ENCODE measurements at regions of chr16 and their contacts with region 1.

Region 1: DNA sequence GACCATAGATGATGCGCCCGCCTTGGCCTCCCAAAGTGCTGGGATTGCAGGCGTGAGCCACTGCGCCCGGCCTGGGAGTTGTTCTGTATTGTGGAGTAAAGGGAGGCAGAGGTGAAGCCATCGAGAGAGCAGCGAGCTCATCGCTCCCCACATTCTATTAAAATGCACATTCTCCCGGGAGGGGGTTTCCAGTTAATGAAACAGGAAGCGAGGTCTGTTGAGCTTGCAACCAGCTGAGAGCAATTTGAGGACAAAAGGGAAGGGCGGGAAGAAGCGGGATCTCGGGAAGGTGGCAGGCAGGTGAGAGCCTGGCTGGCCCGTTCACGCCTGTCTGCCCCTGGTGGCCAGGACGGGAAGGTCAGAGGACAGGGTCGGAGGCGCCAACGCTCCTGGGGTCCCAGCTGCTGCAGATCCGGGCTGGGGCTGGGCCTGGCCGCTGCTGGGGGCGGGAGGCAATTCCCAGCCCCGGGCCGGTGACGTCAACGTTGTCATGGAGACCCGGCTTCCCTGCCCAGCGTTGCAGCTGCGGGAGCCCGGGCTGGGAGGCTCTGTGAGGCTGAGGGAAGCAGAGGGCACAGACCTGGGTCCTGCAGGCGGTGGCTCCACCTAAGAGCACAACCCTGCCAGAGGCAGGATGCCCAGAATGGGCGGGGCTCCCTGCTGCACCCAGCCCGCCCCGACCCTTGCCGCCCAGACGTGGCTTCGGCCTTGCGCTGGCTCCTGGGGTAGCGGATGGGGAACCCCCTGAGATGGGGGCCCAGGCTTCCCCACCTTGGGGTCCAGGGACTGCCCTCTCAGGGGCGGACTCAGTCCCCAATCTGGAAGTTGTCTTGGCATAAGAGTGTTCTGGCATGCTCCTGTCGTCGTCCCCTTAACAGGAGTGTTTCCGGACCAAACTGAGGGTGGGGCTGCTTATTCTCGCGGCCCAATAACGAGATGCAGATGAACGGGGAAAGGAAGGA is 48.7 kb upstream of the PLCG2 start:
- DNase-seq: peak; percentile 42 to 73 (median 58)
- H3K4me3 ChIP-seq: peak overlapping the region; percentile 11 to 25
- H3K4me3 Mint-ChIP-seq: peak overlapping the region; percentile 85 to 93 (median 88)
- H3K27ac ChIP-seq: peak overlapping the region; percentile 65
- H3K27ac Mint-ChIP-seq: peak overlapping the region; percentile 78 to 97 (median 93)
- H3K4me1 ChIP-seq: peaks cover 12% of the 10 kb centered on the region
- H3K4me1 Mint-ChIP-seq: peaks cover 8 to 25% (median 17%) of the 10 kb centered on the region in 4 donors
- H3K27me3 ChIP-seq: no peaks in the 10 kb centered on the region
- H3K27me3 Mint-ChIP-seq: no peaks in the 10 kb centered on the region

Region 2: DNA sequence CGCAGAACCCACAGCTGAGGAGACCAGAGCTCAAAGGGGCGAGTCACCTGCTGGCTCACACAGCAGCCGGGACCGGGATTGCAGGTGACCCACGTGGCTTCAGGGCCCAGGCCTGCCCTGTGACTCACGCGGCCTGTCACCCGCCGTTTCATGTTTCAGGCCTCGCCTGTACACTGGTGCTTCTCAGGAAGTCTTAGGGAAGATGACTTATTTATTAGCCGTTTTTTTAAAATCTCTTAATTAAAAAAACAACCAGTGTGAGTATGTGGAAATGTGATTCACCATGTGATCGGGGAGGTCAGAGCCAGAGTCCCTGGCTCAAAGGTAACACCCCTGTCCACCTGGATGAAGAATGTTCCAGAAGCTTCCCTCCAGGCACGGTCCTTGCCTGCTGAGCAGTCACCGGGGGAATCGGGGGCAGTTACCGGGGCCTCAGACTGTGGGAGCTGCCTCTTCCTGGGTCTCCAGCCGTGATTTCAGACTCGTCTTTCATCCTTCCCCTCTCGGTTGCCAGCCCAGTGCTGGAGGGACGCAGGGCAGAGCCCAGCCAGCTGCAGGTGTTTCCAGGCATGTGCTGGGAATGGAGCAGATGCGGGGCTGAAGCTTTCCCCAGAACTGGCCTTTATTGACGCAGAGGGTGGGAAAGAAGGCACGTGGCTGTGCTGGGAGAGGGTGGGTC is 236.5 kb before region 1 on chr16:
- CTCF ChIA-PET with region 1: no interaction called
- POLR2A ChIA-PET with region 1: no interaction called
- intact Hi-C with region 1: no loop called
- DNase-seq: no peak
- H3K4me3 ChIP-seq: no peak overlapping the region
- H3K4me3 Mint-ChIP-seq: no peak overlapping the region
- H3K27ac ChIP-seq: no peak overlapping the region
- H3K27ac Mint-ChIP-seq: peak overlapping the region in 5 of 7 donors; percentile 13 to 85 (median 32)
- H3K4me1 ChIP-seq: peaks cover 14% of the 10 kb centered on the region
- H3K4me1 Mint-ChIP-seq: peaks cover 18 to 54% (median 40%) of the 10 kb centered on the region in 4 donors
- H3K27me3 ChIP-seq: no peaks in the 10 kb centered on the region
- H3K27me3 Mint-ChIP-seq: no peaks in the 10 kb centered on the region

Region 3: DNA sequence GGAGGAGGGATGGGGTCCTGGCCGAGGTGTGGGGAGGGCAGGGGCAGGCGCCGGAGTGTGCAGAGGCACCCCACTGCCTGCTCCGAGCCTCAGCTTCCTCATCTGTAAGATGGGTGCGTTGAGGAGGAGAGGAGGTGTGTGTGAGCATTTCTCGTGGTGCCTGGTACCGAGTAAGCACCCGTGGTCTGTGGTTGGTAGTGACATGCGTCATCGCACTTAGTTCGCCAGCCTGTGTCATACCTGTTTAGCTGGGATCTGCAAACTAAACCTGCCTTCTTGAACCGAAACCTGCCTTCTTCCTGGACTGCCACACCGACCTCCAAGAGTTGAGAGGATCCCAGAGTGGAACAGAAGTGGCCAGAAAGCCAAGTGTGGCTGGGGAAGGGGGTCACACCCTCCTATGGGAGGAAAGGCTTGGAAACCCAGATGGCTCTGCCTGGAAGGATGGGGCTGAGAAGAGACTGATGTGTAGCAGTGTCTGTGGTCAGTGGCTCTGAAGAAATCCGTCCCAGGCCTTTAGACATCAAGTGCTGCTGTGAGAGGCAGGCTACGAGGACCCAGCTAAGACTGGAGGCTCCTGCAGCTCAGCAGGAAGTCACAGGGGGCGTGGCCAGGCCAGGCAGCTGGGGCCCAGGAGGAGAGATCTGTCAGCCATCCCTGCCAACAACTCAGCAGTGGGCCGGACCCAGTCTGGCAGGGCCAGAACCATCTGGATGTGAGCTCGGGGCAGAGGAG is 113.9 kb before region 1 on chr16:
- CTCF ChIA-PET with region 1: interaction called, 112 read pairs
- POLR2A ChIA-PET with region 1: interaction called, 6 read pairs
- intact Hi-C with region 1: no loop called
- DNase-seq: peak; percentile 75 to 89 (median 84)
- H3K4me3 ChIP-seq: peak overlapping the region; percentile 10 to 53
- H3K4me3 Mint-ChIP-seq: peak overlapping the region; percentile 63 to 82 (median 76)
- H3K27ac ChIP-seq: peak overlapping the region; percentile 75
- H3K27ac Mint-ChIP-seq: peak overlapping the region in 2 of 7 donors; percentile 96 to 97
- H3K4me1 ChIP-seq: peaks cover 25% of the 10 kb centered on the region
- H3K4me1 Mint-ChIP-seq: peaks cover 9 to 19% (median 12%) of the 10 kb centered on the region in 4 donors
- H3K27me3 ChIP-seq: no peaks in the 10 kb centered on the region
- H3K27me3 Mint-ChIP-seq: no peaks in the 10 kb centered on the region

Region 4: DNA sequence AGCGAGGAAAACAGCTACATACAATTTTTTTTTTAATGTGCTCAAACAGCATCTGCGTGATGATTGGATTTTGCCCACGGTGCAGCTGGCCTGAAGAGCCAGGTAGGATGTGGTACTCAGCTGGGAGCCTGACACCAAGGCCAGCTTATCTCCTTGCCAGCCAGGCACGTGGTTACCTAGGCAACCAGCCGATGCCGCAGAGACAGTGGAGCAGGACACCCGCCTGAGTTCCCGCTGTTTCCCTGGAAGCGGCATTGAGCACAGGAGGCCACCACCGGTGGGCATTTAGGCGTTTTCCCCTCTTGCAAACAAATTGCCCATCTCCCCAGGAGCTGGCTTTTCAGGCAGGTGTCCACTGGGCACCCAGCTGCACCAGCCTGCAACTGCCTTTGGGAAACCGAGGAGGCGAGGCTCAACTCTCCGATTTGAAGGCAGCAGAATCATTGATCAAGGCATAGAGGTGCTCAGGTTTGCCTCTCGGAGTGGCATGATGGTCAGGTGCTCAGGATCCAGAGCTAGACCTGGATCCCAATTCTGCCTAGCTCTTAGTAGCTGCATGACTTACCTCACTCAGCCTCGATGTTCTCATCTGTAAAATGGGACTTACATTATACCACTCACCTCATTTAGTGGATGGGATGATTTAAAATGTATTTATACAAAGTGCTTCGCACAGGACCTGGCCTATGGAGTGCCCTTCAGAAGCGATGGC is 88.8 kb before region 1 on chr16:
- CTCF ChIA-PET with region 1: no interaction called
- POLR2A ChIA-PET with region 1: no interaction called
- intact Hi-C with region 1: no loop called
- DNase-seq: no peak
- H3K4me3 ChIP-seq: no peak overlapping the region
- H3K4me3 Mint-ChIP-seq: no peak overlapping the region
- H3K27ac ChIP-seq: no peak overlapping the region
- H3K27ac Mint-ChIP-seq: peak overlapping the region in 1 of 7 donors; percentile 35
- H3K4me1 ChIP-seq: no peaks in the 10 kb centered on the region
- H3K4me1 Mint-ChIP-seq: peaks cover 6 to 11% (median 9%) of the 10 kb centered on the region in 4 donors
- H3K27me3 ChIP-seq: no peaks in the 10 kb centered on the region
- H3K27me3 Mint-ChIP-seq: no peaks in the 10 kb centered on the region

Region 5: GRCh38 chr16:81745704-81746558 is 15.6 kb after region 1 on chr16:
- CTCF ChIA-PET with region 1: interaction called, 9 read pairs
- POLR2A ChIA-PET with region 1: interaction called, 3 read pairs
- intact Hi-C with region 1: loop called (anchors 1 kb)
- DNase-seq: peak; percentile 63 to 74 (median 71)
- H3K4me3 ChIP-seq: peak overlapping the region; percentile 37 to 50
- H3K4me3 Mint-ChIP-seq: peak overlapping the region; percentile 76 to 94 (median 86)
- H3K27ac ChIP-seq: peak overlapping the region; percentile 38
- H3K27ac Mint-ChIP-seq: peak overlapping the region; percentile 75 to 93 (median 88)
- H3K4me1 ChIP-seq: peaks cover 12% of the 10 kb centered on the region
- H3K4me1 Mint-ChIP-seq: peaks cover 4 to 15% (median 9%) of the 10 kb centered on the region in 4 donors
- H3K27me3 ChIP-seq: no peaks in the 10 kb centered on the region
- H3K27me3 Mint-ChIP-seq: peaks cover 1 to 2% of the 10 kb centered on the region in 2 donors

Measured in CD4-positive, alpha-beta memory T cell (primary cell).